ENCODE measurements at regions of chr5 and their contacts with region 1.

Region 1: DNA sequence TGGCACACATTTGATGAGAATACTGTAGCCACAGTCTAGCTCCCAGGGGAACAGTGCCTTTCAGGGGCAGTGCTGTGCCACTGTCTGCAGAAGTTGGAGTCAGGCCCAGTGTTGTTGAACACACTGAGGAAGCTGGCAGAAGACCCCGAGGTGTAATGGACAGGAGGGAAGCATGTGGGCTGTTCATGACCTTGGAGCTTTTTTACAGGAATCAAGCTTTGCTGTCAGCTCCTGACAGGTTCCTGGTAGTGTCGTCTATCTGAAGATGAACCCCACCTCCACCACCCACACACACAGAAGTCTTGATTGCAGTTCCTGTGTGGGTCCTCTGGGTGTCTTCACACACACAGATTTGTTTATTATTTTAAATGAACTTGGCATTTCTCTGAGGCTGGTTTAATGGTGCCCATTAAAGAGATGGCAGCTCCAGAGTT is 40.3 kb upstream of the TNFAIP8 start:
- DNase-seq: peak; percentile 82
- H3K4me3 Mint-ChIP-seq: no peak overlapping the region
- H3K27ac Mint-ChIP-seq: no peak overlapping the region
- H3K4me1 Mint-ChIP-seq: no peaks in the 10 kb centered on the region
- H3K27me3 Mint-ChIP-seq: no peaks in the 10 kb centered on the region
- CTCF ChIP-seq: peak; percentile 39

Region 2: GRCh38 chr5:119335261-119335677 is 19.7 kb after region 1 on chr5:
- CTCF ChIA-PET with region 1: interaction called, 88 read pairs
- POLR2A ChIA-PET with region 1: interaction called, 23 read pairs
- intact Hi-C with region 1: loop called (anchors 1 kb)
- DNase-seq: no peak
- H3K4me3 Mint-ChIP-seq: peak overlapping the region; percentile 72
- H3K27ac Mint-ChIP-seq: peak overlapping the region; percentile 76
- H3K4me1 Mint-ChIP-seq: peaks cover 45% of the 10 kb centered on the region
- H3K27me3 Mint-ChIP-seq: no peaks in the 10 kb centered on the region
- CTCF ChIP-seq: no peak

Region 3: GRCh38 chr5:119340597-119341218 is 25.2 kb after region 1 on chr5:
- CTCF ChIA-PET with region 1: interaction called, 88 read pairs
- POLR2A ChIA-PET with region 1: interaction called, 5 read pairs
- intact Hi-C with region 1: no loop called
- DNase-seq: no peak
- H3K4me3 Mint-ChIP-seq: no peak overlapping the region
- H3K27ac Mint-ChIP-seq: no peak overlapping the region
- H3K4me1 Mint-ChIP-seq: peaks cover 24% of the 10 kb centered on the region
- H3K27me3 Mint-ChIP-seq: no peaks in the 10 kb centered on the region
- CTCF ChIP-seq: no peak

Measured in MCF 10A (cell line).